ENCODE measurements at regions of chr2 and their contacts with region 1.

Region 1: DNA sequence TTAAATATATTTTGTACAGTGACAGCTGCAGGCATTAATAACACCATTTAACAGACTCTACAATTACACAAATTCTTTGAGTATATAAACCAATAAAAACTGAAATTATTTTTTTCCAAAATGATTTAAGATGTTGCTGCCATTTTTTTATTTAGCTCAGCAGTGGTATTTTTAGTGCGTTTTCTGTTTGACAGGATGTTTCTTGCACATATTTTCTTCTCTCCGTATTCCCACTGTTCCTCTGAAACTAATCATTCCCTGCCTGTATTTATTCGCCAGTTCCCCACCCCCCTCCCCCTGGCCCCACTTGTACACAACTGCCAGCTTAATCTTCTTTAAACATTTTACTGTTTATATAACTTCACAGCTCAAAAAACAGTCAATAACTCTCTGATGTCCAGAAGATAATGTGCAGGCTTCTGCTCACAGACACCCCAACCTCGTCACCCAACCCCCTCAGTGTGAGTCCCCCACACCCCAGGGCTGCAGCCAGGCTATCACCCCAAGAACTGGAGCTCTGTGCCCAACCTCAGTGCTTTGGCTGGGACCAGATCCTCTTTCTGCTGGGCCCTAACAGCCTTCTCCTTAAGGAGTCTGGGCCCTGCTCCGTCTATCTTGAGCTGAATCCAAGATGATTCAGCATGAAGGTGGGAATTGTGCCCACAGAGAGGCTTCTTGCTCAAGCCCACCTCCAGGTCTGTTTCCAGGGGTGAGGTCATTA is 41.6 kb upstream of the MAP4K4 start:
- DNase-seq: no peak
- ATAC-seq: no peak
- H3K4me3 ChIP-seq: no peak overlapping the region
- H3K4me3 Mint-ChIP-seq: no peak overlapping the region
- H3K27ac ChIP-seq: no peak overlapping the region
- H3K27ac Mint-ChIP-seq: no peak overlapping the region
- H3K4me1 ChIP-seq: peaks cover 12% of the 10 kb centered on the region
- H3K4me1 Mint-ChIP-seq: peaks cover 13% of the 10 kb centered on the region
- H3K27me3 ChIP-seq: no peaks in the 10 kb centered on the region
- H3K27me3 Mint-ChIP-seq: no peaks in the 10 kb centered on the region
- CTCF ChIP-seq: no peak

Region 2: GRCh38 chr2:101725515-101726192 is 69.8 kb after region 1 on chr2:
- CTCF ChIA-PET with region 1: no interaction called
- POLR2A ChIA-PET with region 1: no interaction called
- intact Hi-C with region 1: loop called in 1 of 2 experiments (anchors 10 kb)
- DNase-seq: peak in 2 of 9 experiments; percentile 48 to 62
- ATAC-seq: peak; percentile 28
- H3K4me3 ChIP-seq: no peak overlapping the region
- H3K4me3 Mint-ChIP-seq: no peak overlapping the region
- H3K27ac ChIP-seq: no peak overlapping the region
- H3K27ac Mint-ChIP-seq: peak overlapping the region; percentile 38
- H3K4me1 ChIP-seq: peaks cover 88% of the 10 kb centered on the region
- H3K4me1 Mint-ChIP-seq: peaks cover 92% of the 10 kb centered on the region
- H3K27me3 ChIP-seq: no peaks in the 10 kb centered on the region
- H3K27me3 Mint-ChIP-seq: no peaks in the 10 kb centered on the region
- CTCF ChIP-seq: peak; percentile 39